Mammary epithelial cell (primary cell): ENCODE measurements at regions of chr20 and their contacts with region 1.

Region 1: DNA sequence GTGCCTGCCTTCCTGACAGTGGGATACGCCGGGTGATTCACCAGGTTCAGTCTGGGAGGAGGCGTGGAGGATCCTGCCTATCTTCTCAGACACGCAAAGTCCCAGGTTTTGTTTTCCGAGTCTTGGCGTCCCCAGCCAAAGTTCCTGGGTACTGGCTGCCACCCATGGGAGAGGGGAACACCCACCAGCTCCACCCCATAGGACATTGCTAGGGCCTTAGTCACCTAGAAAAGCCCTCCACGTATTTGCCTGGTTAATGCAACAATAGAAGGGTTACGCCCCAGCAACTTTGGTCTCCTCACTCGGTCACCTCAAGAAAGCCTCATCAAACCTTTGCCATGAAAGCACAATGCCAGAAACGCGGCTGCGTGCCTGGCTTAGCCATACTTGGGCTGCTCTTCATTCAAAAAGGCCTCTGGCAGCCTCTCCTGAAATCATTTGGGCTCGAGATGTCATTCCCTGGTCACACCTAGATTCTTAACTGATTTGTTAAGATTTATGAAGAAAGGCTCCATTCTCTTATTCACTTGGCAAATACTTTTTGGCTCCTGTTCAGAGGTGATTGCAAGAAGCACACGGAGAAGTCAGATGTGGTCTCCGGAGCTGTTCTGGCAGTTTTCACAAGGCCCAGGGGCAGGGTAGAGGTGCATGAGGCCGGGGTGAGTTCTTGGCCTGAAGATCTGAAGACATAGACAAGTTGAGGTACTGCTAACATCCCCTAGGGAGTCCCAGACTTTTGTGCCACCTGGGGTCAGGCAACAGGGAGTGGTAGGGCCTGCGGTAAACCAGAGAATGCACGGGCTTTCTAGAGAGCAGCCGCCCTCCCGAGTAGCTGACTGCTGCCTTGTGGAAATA is 35.5 kb upstream of the ZNF133 start:
- DNase-seq: peak; percentile 97
- H3K4me3 ChIP-seq: no peak overlapping the region
- H3K27ac ChIP-seq: peak overlapping the region; percentile 95
- H3K4me1 ChIP-seq: peaks cover 19% of the 10 kb centered on the region
- H3K27me3 ChIP-seq: no peaks in the 10 kb centered on the region
- CTCF ChIP-seq: no peak

Region 2: GRCh38 chr20:17968366-17969279 is 284.2 kb before region 1 on chr20 and contains the starts of genes MGME1 and SNX5:
- CTCF ChIA-PET with region 1: no interaction called
- dilution Hi-C with region 1: no loop called
- in situ Hi-C with region 1: no loop called
- intact Hi-C with region 1: loop called (anchors 1 kb)
- DNase-seq: peak; percentile 99
- H3K4me3 ChIP-seq: peak within 1 kb of the TSS; percentile 88 to 93 (median 91)
- H3K27ac ChIP-seq: peak within 1 kb of the TSS; percentile 98
- H3K4me1 ChIP-seq: peaks cover 26% of the 10 kb centered on the region
- H3K27me3 ChIP-seq: no peaks in the 10 kb centered on the region
- CTCF ChIP-seq: no peak
- total RNA-seq, gene MGME1: 15.8 to 36.2 TPM
- total RNA-seq, gene SNX5: 68.0 to 137 TPM

Region 3: GRCh38 chr20:18154342-18154741 is 98.5 kb before region 1 on chr20:
- CTCF ChIA-PET with region 1: no interaction called
- dilution Hi-C with region 1: no loop called
- in situ Hi-C with region 1: no loop called
- intact Hi-C with region 1: no loop called
- DNase-seq: no peak
- H3K4me3 ChIP-seq: no peak overlapping the region
- H3K27ac ChIP-seq: no peak overlapping the region
- H3K4me1 ChIP-seq: no peaks in the 10 kb centered on the region
- H3K27me3 ChIP-seq: no peaks in the 10 kb centered on the region
- CTCF ChIP-seq: no peak

Region 4: GRCh38 chr20:18188434-18188833 is 64.4 kb before region 1 on chr20:
- CTCF ChIA-PET with region 1: no interaction called
- dilution Hi-C with region 1: no loop called
- in situ Hi-C with region 1: no loop called
- intact Hi-C with region 1: loop called (anchors 1 kb)
- DNase-seq: no peak
- H3K4me3 ChIP-seq: no peak overlapping the region
- H3K27ac ChIP-seq: no peak overlapping the region
- H3K4me1 ChIP-seq: peaks cover 43% of the 10 kb centered on the region
- H3K27me3 ChIP-seq: no peaks in the 10 kb centered on the region
- CTCF ChIP-seq: no peak

Region 5: GRCh38 chr20:18197382-18198131 is 55.3 kb before region 1 on chr20:
- CTCF ChIA-PET with region 1: interaction called, 4 read pairs
- dilution Hi-C with region 1: loop called (anchors 5 kb)
- in situ Hi-C with region 1: loop called in 1 of 2 experiments (anchors 5 kb)
- intact Hi-C with region 1: loop called (anchors 1 kb)
- DNase-seq: peak; percentile 98
- H3K4me3 ChIP-seq: no peak overlapping the region
- H3K27ac ChIP-seq: peak overlapping the region; percentile 96
- H3K4me1 ChIP-seq: peaks cover 11% of the 10 kb centered on the region
- H3K27me3 ChIP-seq: no peaks in the 10 kb centered on the region
- CTCF ChIP-seq: peak; percentile 45 to 47

Region 6: GRCh38 chr20:18596270-18596669 is 343.4 kb after region 1 on chr20:
- CTCF ChIA-PET with region 1: no interaction called
- dilution Hi-C with region 1: no loop called
- in situ Hi-C with region 1: no loop called
- intact Hi-C with region 1: no loop called
- DNase-seq: no peak
- H3K4me3 ChIP-seq: no peak overlapping the region
- H3K27ac ChIP-seq: no peak overlapping the region
- H3K4me1 ChIP-seq: no peaks in the 10 kb centered on the region
- H3K27me3 ChIP-seq: no peaks in the 10 kb centered on the region
- CTCF ChIP-seq: no peak